Activated CD8-positive, alpha-beta T cell treated with anti-CD3 and anti-CD28 coated beads, Interleukin-2, amount 10 ng/mL, durations not matched to agents 7 days and 5 days (primary cell): ENCODE measurements at regions of chr17 and their contacts with region 1.

Region 1: DNA sequence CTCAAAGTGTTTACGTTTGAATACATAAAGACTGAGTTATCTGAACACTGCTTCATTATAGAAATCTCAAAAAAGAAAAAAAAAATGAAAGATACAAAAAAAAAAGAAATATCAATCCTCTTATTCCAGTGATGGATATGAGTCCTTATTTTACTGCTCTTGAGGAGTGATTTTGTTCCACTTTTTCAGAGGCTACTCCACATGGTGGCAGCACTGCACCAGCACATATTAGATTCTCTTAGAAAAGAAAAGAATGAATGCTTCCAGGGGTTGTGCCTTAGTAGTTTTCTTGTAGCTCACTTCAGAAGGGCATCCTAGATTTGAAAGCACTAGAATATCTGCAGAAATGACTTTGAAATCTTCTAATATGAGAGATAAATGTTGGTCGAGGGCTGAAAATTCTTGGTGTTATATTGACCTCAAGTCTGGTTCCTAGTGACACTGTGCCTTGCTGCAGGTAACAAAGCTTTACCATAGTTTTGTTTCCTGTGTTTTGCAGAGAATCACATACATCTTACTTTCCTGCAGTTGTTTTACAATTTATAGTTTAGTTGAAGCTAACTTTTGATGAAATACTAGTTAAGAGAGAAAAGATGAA is 25.9 kb downstream of the AP2B1 start:
- DNase-seq: peak; percentile 58
- ATAC-seq: no peak
- H3K4me3 Mint-ChIP-seq: no peak overlapping the region
- H3K27ac Mint-ChIP-seq: no peak overlapping the region
- H3K4me1 Mint-ChIP-seq: peaks cover 1% of the 10 kb centered on the region
- H3K27me3 Mint-ChIP-seq: no peaks in the 10 kb centered on the region

Region 2: GRCh38 chr17:35587074-35587971 is 25.7 kb before region 1 on chr17 and contains the start of gene AP2B1:
- CTCF ChIA-PET with region 1: interaction called, 16 read pairs
- POLR2A ChIA-PET with region 1: no interaction called
- DNase-seq: peak; percentile 97
- ATAC-seq: peak; percentile 99
- H3K4me3 Mint-ChIP-seq: peak within 1 kb of the TSS; percentile 89
- H3K27ac Mint-ChIP-seq: peak within 1 kb of the TSS; percentile 96
- H3K4me1 Mint-ChIP-seq: peaks cover 29% of the 10 kb centered on the region
- H3K27me3 Mint-ChIP-seq: peaks cover 12% of the 10 kb centered on the region
- total RNA-seq, gene AP2B1: 161 to 172 TPM

Region 3: GRCh38 chr17:35660902-35661301 is 47.9 kb after region 1 on chr17:
- CTCF ChIA-PET with region 1: interaction called, 13 read pairs
- POLR2A ChIA-PET with region 1: no interaction called
- DNase-seq: no peak
- ATAC-seq: no peak
- H3K4me3 Mint-ChIP-seq: no peak overlapping the region
- H3K27ac Mint-ChIP-seq: no peak overlapping the region
- H3K4me1 Mint-ChIP-seq: no peaks in the 10 kb centered on the region
- H3K27me3 Mint-ChIP-seq: no peaks in the 10 kb centered on the region

Region 4: GRCh38 chr17:35747540-35748017 is 134.6 kb after region 1 on chr17:
- CTCF ChIA-PET with region 1: interaction called, 104 read pairs
- POLR2A ChIA-PET with region 1: interaction called, 10 read pairs
- DNase-seq: peak; percentile 87
- ATAC-seq: peak; percentile 87
- H3K4me3 Mint-ChIP-seq: no peak overlapping the region
- H3K27ac Mint-ChIP-seq: no peak overlapping the region
- H3K4me1 Mint-ChIP-seq: peaks cover 9% of the 10 kb centered on the region
- H3K27me3 Mint-ChIP-seq: peaks cover 31% of the 10 kb centered on the region